AG04450 (cell line): ENCODE measurements at regions of chr16 and their contacts with region 1.

Region 1: GRCh38 chr16:23435500-23435899 is 17.5 kb downstream of the COG7 start:
- DNase-seq: no peak
- H3K4me3 ChIP-seq: no peak overlapping the region
- H3K27ac ChIP-seq: no peak overlapping the region
- H3K27me3 ChIP-seq: no peaks in the 10 kb centered on the region
- CTCF ChIP-seq: peak; percentile 91

Region 2: GRCh38 chr16:22898874-22899348 is 536.6 kb before region 1 on chr16:
- CTCF ChIA-PET with region 1: interaction called, 62 read pairs
- POLR2A ChIA-PET with region 1: no interaction called
- DNase-seq: no peak
- H3K4me3 ChIP-seq: no peak overlapping the region
- H3K27ac ChIP-seq: no peak overlapping the region
- H3K27me3 ChIP-seq: no peaks in the 10 kb centered on the region
- CTCF ChIP-seq: peak; percentile 61

Region 3: GRCh38 chr16:23141959-23142740 is 293.4 kb before region 1 on chr16:
- CTCF ChIA-PET with region 1: interaction called, 11 read pairs
- POLR2A ChIA-PET with region 1: no interaction called
- DNase-seq: no peak
- H3K4me3 ChIP-seq: no peak overlapping the region
- H3K27ac ChIP-seq: no peak overlapping the region
- H3K27me3 ChIP-seq: no peaks in the 10 kb centered on the region
- CTCF ChIP-seq: no peak

Region 4: DNA sequence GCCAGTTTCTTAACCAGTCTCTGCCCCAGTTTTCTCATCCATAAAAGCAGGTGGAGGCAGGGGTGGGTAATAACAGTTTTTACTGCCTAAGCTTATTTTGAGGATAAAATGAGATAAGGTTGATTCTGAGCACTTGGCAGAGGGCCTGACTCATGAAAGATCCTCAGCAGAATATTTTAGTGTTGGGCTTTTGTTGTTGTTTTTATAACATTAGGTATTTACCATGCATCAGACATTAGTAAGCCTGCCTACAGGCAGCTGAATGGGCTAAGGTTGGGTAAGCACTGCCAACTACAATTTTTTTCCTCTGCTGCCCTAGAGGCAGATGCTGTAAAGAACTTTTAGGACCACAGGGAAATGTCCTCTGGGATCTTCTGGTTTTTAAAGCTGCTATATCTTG is 209.9 kb before region 1 on chr16:
- CTCF ChIA-PET with region 1: no interaction called
- POLR2A ChIA-PET with region 1: no interaction called
- DNase-seq: no peak
- H3K4me3 ChIP-seq: no peak overlapping the region
- H3K27ac ChIP-seq: no peak overlapping the region
- H3K27me3 ChIP-seq: no peaks in the 10 kb centered on the region
- CTCF ChIP-seq: no peak

Region 5: GRCh38 chr16:23278031-23278430 is 157.5 kb before region 1 on chr16:
- CTCF ChIA-PET with region 1: interaction called, 14 read pairs
- POLR2A ChIA-PET with region 1: no interaction called
- DNase-seq: no peak
- H3K4me3 ChIP-seq: no peak overlapping the region
- H3K27ac ChIP-seq: no peak overlapping the region
- H3K27me3 ChIP-seq: no peaks in the 10 kb centered on the region
- CTCF ChIP-seq: no peak

Region 6: DNA sequence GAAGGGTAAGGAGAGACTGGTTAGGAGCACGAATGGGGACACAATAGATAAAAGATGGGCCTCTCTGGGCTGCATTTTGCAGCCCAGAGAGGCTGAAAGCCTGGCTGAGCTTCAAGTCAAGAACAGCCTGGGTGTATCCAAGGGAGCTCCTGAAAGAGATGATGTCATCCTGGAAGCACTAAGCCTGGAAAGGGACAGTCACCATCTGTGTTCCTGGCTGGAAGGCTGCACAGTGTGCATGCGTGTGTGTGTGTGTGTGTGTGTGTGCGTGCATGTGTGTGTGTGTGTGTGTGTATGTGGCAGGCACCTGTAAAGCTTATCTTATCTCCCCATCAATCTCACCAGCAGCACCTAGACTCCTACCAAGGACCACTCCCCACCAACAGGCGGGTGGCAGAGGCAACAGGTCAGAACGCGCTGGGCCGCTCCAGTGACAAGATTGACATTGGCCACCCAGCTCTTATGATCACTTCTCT is 26.6 kb before region 1 on chr16:
- CTCF ChIA-PET with region 1: interaction called, 49 read pairs
- POLR2A ChIA-PET with region 1: no interaction called
- DNase-seq: no peak
- H3K4me3 ChIP-seq: no peak overlapping the region
- H3K27ac ChIP-seq: no peak overlapping the region
- H3K27me3 ChIP-seq: no peaks in the 10 kb centered on the region
- CTCF ChIP-seq: no peak

Region 7: DNA sequence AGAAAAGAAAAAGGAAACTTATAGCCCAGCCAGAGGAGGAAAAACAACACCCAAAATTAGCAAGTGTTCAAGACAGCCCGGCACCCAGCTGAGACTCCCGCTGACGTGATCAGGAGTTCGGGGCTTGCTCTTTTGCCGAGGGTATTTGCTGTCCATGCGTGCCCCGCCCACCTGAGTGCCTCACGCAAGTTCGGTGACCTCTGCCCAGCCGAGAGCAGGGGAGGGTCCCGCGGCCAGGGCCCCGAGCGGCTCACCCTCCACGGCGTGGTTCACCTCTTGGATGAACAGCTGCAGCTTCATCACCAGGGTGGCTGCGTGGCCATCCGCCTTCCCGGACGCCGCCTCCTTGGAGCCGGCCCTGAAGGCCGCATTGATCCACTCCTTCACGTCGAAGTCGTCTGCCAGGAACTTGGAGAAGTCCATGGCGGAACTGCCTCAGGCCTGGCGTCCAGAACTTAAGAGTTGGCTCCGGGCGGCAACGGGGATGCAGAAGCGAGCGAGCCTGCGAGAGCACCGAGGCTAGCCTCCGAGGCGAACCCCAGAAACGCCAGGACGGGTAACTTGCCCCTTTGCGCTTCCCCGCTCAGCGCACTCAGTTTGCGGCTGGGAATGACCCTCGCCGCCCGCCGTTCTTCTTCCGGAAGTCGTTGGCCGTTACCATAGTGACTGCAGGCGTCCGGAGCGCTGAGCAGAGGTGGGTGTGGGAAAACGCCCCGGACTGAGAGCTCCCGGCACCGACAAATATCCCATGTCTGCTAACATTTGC is 17.3 kb after region 1 on chr16 and contains the start of gene COG7:
- CTCF ChIA-PET with region 1: interaction called, 99 read pairs
- POLR2A ChIA-PET with region 1: no interaction called
- DNase-seq: peak; percentile 71
- H3K4me3 ChIP-seq: peak within 1 kb of the TSS; percentile 96
- H3K27ac ChIP-seq: peak within 1 kb of the TSS; percentile 70
- H3K27me3 ChIP-seq: no peaks in the 10 kb centered on the region
- CTCF ChIP-seq: no peak
- polyA plus RNA-seq, gene COG7: 19.6 and 24.5 TPM in 2 replicates